HepG2 (cell line): ENCODE measurements at regions of chr19 and their contacts with region 1.

Region 1: GRCh38 chr19:33302175-33302973 is at the start of gene CEBPA:
- DNase-seq: peak; percentile 78
- ATAC-seq: peak; percentile 71
- H3K4me3 ChIP-seq: peak within 1 kb of the TSS; percentile 85 to 89 (median 88)
- H3K27ac ChIP-seq: peak within 1 kb of the TSS; percentile 95
- H3K4me1 ChIP-seq: peaks cover 51% of the 10 kb centered on the region
- H3K27me3 ChIP-seq: no peaks in the 10 kb centered on the region
- CTCF ChIP-seq: peak; percentile 68
- EP300 ChIP-seq: peak in 1 of 2 experiments; percentile 42; a peak in 1 of 4 replicates
- POLR2A ChIP-seq: peak; percentile 99
- RAD21 ChIP-seq: peak; percentile 96
- total RNA-seq, gene CEBPA: 99.9 and 103 TPM in 2 replicates

Region 2: GRCh38 chr19:33214596-33214995 is 87.8 kb before region 1 on chr19:
- CTCF ChIA-PET with region 1: no interaction called
- POLR2A ChIA-PET with region 1: no interaction called
- in situ Hi-C with region 1: no loop called
- intact Hi-C with region 1: no loop called
- DNase-seq: peak; percentile 41
- ATAC-seq: peak; percentile 62
- H3K4me3 ChIP-seq: no peak overlapping the region
- H3K27ac ChIP-seq: no peak overlapping the region
- H3K4me1 ChIP-seq: peaks cover 41% of the 10 kb centered on the region
- H3K27me3 ChIP-seq: peaks cover 7 to 18% of the 10 kb centered on the region in 2 experiments; a peak in 4 of 5 replicates
- CTCF ChIP-seq: peak; percentile 73
- EP300 ChIP-seq: no peak
- POLR2A ChIP-seq: no peak
- RAD21 ChIP-seq: no peak

Region 3: DNA sequence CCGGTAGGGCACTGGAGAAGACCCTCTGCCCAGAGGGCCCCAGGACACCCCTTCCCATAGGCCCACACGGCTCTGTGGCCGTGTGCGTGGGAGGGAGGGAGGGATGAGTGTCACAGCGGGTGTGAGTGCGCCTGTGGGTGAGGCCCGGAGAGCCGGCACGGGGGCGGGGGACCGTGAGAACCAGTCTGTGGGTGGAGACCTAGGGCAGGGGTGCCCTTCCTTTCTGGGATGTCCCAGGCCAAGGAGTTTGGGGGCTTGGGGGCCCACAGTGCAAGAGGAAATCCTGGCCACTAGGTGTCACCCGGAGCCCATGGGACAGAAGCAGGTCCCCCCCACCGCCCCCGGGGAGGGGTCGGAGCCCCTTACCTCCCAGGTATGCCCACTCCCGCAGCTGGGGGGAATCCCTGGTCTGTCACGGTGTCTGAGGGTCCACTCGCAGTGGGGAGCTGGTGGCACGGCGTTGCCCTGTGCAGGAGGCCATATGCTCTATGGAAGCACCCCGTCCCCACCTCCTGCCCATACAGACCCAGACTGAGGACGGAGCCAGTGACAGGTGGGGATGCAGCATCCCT is 60.8 kb before region 1 on chr19:
- CTCF ChIA-PET with region 1: interaction called, 4 read pairs
- POLR2A ChIA-PET with region 1: interaction called, 51 read pairs
- in situ Hi-C with region 1: loop called (anchors 5 kb)
- intact Hi-C with region 1: loop called (anchors 2 kb)
- DNase-seq: no peak
- ATAC-seq: peak; percentile 69
- H3K4me3 ChIP-seq: peak overlapping the region in 2 of 3 experiments; percentile 39 to 67; a peak in 5 of 6 replicates
- H3K27ac ChIP-seq: peak overlapping the region; percentile 49
- H3K4me1 ChIP-seq: peaks cover 46% of the 10 kb centered on the region
- H3K27me3 ChIP-seq: no peaks in the 10 kb centered on the region
- CTCF ChIP-seq: peak; percentile 98
- EP300 ChIP-seq: no peak
- POLR2A ChIP-seq: no peak
- RAD21 ChIP-seq: peak; percentile 98

Region 4: GRCh38 chr19:33273881-33274682 is 28.3 kb before region 1 on chr19:
- CTCF ChIA-PET with region 1: interaction called, 13 read pairs
- POLR2A ChIA-PET with region 1: interaction called, 380 read pairs
- in situ Hi-C with region 1: no loop called
- intact Hi-C with region 1: loop called (anchors 1 kb)
- DNase-seq: peak; percentile 56
- ATAC-seq: no peak
- H3K4me3 ChIP-seq: no peak overlapping the region; a peak in 1 of 6 replicates
- H3K27ac ChIP-seq: peak overlapping the region; percentile 94
- H3K4me1 ChIP-seq: peaks cover 85% of the 10 kb centered on the region
- H3K27me3 ChIP-seq: no peaks in the 10 kb centered on the region
- CTCF ChIP-seq: 0 out of 2 replicates have a peak, but pooled peaks have one; percentile 11
- EP300 ChIP-seq: peak in 1 of 2 experiments; percentile 34; a peak in 1 of 4 replicates
- POLR2A ChIP-seq: no peak; a peak in 1 of 4 replicates
- RAD21 ChIP-seq: no peak

Region 5: GRCh38 chr19:33350538-33351309 is 48.4 kb after region 1 on chr19:
- CTCF ChIA-PET with region 1: no interaction called
- POLR2A ChIA-PET with region 1: interaction called, 26 read pairs
- in situ Hi-C with region 1: no loop called
- intact Hi-C with region 1: no loop called
- DNase-seq: no peak
- ATAC-seq: no peak
- H3K4me3 ChIP-seq: no peak overlapping the region
- H3K27ac ChIP-seq: no peak overlapping the region
- H3K4me1 ChIP-seq: peaks cover 40% of the 10 kb centered on the region
- H3K27me3 ChIP-seq: no peaks in the 10 kb centered on the region
- CTCF ChIP-seq: no peak
- EP300 ChIP-seq: no peak
- POLR2A ChIP-seq: no peak
- RAD21 ChIP-seq: no peak

Region 6: DNA sequence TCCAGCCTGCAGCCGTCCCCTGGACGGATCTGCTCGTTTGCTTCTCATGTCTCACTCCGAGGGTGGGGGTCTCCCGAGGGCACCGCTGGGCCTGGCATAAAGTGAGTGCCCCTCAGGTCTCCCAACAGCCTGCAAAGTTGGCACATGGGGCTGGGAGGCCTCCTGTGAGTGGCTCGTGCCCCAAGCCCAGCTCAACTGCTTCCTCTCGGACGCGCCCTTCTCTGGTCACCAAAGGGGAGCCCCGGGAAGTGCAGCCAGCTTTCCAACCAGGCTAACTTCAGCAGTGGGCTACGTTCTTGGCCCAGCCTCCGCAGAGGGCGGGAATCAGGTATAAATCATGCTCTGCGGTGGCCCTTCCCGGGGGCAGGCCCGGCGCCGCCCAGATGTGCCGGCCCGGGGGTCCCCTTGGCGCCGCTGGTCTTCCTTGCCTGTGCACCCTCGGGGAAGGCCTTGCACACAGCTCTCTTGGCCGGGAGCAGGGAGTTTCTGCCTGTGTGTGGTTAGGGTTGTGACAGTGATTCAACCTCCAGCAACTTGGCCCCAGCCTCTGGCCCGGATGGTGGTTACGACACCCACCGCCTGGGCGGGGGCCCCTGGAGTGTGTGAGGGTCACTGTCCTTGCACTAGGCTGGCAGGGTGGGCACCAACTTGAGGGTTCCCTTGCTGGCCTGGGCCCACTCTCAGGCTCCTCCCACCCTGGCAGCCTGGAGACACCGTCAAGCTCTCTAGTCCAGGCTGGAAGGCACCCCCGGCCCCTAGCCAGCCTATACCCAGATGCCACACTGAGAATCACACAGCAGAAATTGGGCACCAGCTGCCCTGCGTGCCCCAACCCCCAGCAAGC is 91.9 kb after region 1 on chr19:
- CTCF ChIA-PET with region 1: no interaction called
- POLR2A ChIA-PET with region 1: interaction called, 40 read pairs
- in situ Hi-C with region 1: no loop called
- intact Hi-C with region 1: loop called (anchors 5 kb)
- DNase-seq: peak; percentile 55
- ATAC-seq: peak; percentile 5
- H3K4me3 ChIP-seq: peak overlapping the region; percentile 15 to 64 (median 33); a peak in 4 of 6 replicates
- H3K27ac ChIP-seq: peak overlapping the region; percentile 94
- H3K4me1 ChIP-seq: peaks cover 95% of the 10 kb centered on the region
- H3K27me3 ChIP-seq: no peaks in the 10 kb centered on the region
- CTCF ChIP-seq: no peak
- EP300 ChIP-seq: no peak; a peak in 1 of 4 replicates
- POLR2A ChIP-seq: peak; percentile 36 to 44; a peak in 1 of 4 replicates
- RAD21 ChIP-seq: peak; percentile 45; the same call in 1 of the 2 replicates

Region 7: GRCh38 chr19:33406521-33407139 is 104.3 kb after region 1 on chr19:
- CTCF ChIA-PET with region 1: interaction called, 3 read pairs
- POLR2A ChIA-PET with region 1: interaction called, 24 read pairs
- in situ Hi-C with region 1: loop called (anchors 5 kb)
- intact Hi-C with region 1: no loop called
- DNase-seq: peak; percentile 56
- ATAC-seq: peak; percentile 31
- H3K4me3 ChIP-seq: no peak overlapping the region
- H3K27ac ChIP-seq: peak overlapping the region; percentile 10
- H3K4me1 ChIP-seq: peaks cover 53% of the 10 kb centered on the region
- H3K27me3 ChIP-seq: no peaks in the 10 kb centered on the region
- CTCF ChIP-seq: peak; percentile 99
- EP300 ChIP-seq: no peak
- POLR2A ChIP-seq: no peak
- RAD21 ChIP-seq: peak; percentile 98